Gastrocnemius medialis (tissue), 4 donors: ENCODE measurements at regions of chr14 and their contacts with region 1.

Region 1: DNA sequence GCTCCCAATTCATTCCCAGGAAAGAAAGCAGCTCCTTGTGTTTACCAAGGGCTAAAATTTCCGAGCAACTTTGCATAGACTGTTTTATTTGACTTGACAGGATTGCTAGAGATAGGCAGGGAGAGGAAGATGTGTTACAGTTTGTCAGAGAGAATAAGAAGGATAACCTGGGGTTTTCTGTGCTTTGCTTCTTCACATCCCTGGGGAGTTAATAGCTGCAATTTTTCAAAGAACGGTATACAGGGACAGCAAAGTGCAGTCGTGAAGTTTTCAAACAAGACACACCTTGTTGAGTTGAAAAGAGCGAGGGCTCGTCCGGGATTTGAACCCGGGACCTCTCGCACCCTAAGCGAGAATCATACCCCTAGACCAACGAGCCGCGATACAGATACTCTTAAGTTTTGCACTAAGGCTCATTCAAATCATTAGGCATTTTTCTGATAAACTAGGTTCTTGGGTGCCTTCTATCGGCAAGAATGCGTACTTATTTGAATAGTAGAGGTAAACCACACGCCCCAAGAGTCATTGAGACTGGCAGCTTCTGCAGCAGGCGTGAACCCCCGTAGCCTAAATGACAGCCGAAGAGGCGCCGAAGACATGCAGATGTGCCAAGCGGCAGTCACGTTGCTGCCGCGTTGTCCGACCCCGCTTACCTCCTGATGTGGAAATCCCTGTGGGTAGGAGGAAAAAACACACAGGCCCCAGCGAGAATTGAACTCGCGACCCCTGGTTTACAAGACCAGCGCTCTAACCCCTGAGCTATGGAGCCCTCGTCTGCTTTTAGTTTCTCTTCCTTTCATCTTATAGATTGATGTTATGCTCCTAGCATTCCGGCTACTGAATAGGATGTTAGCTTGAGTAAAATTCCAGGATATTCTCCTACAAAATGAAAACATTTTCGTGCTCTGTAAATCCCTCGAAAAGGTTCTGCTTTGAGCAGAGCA is 22.2 kb upstream of the RNASE12 start:
- DNase-seq: peak; percentile 62 to 76
- ATAC-seq: peak; percentile 79 to 82
- H3K4me3 ChIP-seq: peak overlapping the region; percentile 56 to 66 (median 58)
- H3K27ac ChIP-seq: peak overlapping the region; percentile 44 to 73 (median 68)
- H3K4me1 ChIP-seq: peaks cover 9 to 17% of the 10 kb centered on the region in 2 donors
- H3K27me3 ChIP-seq: no peaks in the 10 kb centered on the region
- CTCF ChIP-seq: peak; percentile 72 to 93 (median 83)
- POLR2A ChIP-seq: no peak

Region 2: GRCh38 chr14:20305265-20306078 is 307.9 kb before region 1 on chr14 and contains the start of gene TTC5:
- in situ Hi-C with region 1: no loop called
- intact Hi-C with region 1: loop called (anchors 5 kb)
- DNase-seq: peak; percentile 61 to 76
- ATAC-seq: peak; percentile 94 to 98
- H3K4me3 ChIP-seq: peak within 1 kb of the TSS; percentile 57 to 81 (median 73)
- H3K27ac ChIP-seq: peak within 1 kb of the TSS; percentile 31 to 62 (median 51)
- H3K4me1 ChIP-seq: peaks cover 10 to 13% of the 10 kb centered on the region in 2 donors
- H3K27me3 ChIP-seq: no peaks in the 10 kb centered on the region
- CTCF ChIP-seq: peak; percentile 64 to 90 (median 82)
- POLR2A ChIP-seq: no peak
- total RNA-seq, gene TTC5: 3.7 to 6.3 (median 4.8) TPM

Region 3: GRCh38 chr14:20343092-20343861 is 270.1 kb before region 1 on chr14 and contains the start of gene PARP2:
- in situ Hi-C with region 1: no loop called
- intact Hi-C with region 1: loop called (anchors 5 kb)
- DNase-seq: peak; percentile 97 to 98
- ATAC-seq: peak; percentile 96 to 97
- H3K4me3 ChIP-seq: peak within 1 kb of the TSS; percentile 74 to 83 (median 78)
- H3K27ac ChIP-seq: peak within 1 kb of the TSS; percentile 88 to 94 (median 92)
- H3K4me1 ChIP-seq: peaks cover 5 to 10% of the 10 kb centered on the region in 2 donors
- H3K27me3 ChIP-seq: no peaks in the 10 kb centered on the region
- CTCF ChIP-seq: no peak
- POLR2A ChIP-seq: peak; percentile 90 to 97
- total RNA-seq, gene PARP2: 5.1 to 15.0 (median 7.0) TPM

Region 4: DNA sequence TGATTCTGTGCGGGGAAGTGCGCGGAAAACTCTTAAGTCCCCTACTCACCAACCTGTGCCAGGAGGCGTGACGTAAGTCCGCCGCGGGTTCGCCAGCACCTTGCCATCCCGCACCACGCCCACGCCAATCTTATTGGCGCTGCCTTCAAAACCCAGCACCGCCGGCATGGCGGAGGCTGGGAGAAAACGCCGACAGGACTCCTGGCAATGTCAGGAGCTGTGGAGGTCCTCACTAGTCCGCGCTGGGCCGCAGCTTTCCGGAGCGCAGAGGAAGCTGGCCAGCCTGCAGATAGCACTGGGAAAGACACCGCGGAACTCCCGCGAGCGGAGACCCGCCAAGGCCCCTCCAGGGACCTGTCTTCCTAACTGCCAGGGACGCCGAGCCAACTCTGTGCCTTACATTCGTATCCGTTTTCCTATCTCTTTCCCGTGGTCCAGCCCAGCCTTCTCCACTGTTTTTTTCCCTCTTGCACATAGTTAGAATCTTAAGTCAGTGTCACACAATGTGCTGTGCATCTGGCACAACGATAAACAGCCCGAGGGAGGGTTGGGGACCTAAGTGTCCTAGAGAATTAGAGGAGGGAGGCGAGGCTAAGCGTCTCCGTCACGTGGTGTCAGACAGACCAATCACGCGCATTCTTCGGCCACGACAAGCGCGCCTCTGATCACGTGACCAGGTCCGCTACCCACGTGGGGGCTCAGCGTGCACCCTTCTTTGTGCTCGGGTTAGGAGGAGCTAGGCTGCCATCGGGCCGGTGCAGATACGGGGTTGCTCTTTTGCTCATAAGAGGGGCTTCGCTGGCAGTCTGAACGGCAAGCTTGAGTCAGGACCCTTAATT is 158.6 kb before region 1 on chr14 and contains the starts of genes APEX1 and OSGEP:
- in situ Hi-C with region 1: no loop called
- intact Hi-C with region 1: loop called (anchors 1 kb)
- DNase-seq: peak; percentile 99
- ATAC-seq: peak; percentile 95 to 96
- H3K4me3 ChIP-seq: peak within 1 kb of the TSS; percentile 81 to 88 (median 87)
- H3K27ac ChIP-seq: peak within 1 kb of the TSS; percentile 86 to 98 (median 98)
- H3K4me1 ChIP-seq: peaks cover 23 to 29% of the 10 kb centered on the region in 2 donors
- H3K27me3 ChIP-seq: no peaks in the 10 kb centered on the region
- CTCF ChIP-seq: peak in 3 of 5 experiments; percentile 20 to 51 (median 51)
- POLR2A ChIP-seq: peak; percentile 91 to 95
- total RNA-seq, gene APEX1: 65.6 to 132 (median 94.2) TPM
- total RNA-seq, gene OSGEP: 15.8 to 21.7 (median 20.5) TPM

Region 5: DNA sequence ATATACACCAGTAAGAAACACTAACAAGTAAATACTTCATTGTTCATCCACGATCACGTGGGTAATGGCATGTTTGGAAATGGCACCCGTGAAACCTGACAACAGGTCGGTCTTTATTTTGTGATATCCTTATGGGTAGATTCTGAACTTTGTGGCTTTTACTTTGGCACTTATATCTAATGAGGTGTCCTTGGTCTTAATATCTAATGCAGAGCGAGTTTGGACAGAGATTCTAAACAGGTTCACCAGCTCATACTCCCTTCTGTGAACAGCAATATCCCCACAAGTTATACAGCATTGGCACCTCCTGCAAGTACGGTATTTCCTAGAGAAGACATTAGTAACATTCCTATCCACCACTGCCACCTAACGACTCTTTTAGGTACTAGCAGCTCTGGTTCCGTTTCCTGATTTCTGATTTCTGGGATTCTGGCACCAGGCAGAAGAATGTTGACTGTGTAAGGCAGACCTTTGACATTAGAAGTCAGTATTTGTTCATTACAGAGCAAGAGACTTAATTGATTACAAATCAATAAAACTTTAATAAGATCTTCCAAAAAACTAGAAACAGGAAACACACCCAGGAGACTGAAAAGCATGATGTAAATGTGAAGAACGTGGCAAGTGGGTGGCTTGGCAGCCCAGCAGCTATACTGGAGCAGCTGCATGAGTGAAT is 77.6 kb after region 1 on chr14:
- in situ Hi-C with region 1: loop called in 3 of 4 experiments (anchors 5 kb)
- intact Hi-C with region 1: loop called (anchors 1 kb)
- DNase-seq: peak in 1 of 2 donors; percentile 16
- ATAC-seq: peak; percentile 93
- H3K4me3 ChIP-seq: no peak overlapping the region
- H3K27ac ChIP-seq: no peak overlapping the region
- H3K4me1 ChIP-seq: no peaks in the 10 kb centered on the region
- H3K27me3 ChIP-seq: no peaks in the 10 kb centered on the region
- CTCF ChIP-seq: peak; percentile 69 to 88 (median 80)
- POLR2A ChIP-seq: no peak

Region 6: GRCh38 chr14:21269252-21270046 is 656.1 kb after region 1 on chr14 and contains the start of gene HNRNPC:
- in situ Hi-C with region 1: no loop called
- intact Hi-C with region 1: loop called (anchors 10 kb)
- DNase-seq: peak; percentile 99 to 100
- ATAC-seq: peak; percentile 97 to 99
- H3K4me3 ChIP-seq: peak within 1 kb of the TSS; percentile 69 to 95 (median 81)
- H3K27ac ChIP-seq: peak within 1 kb of the TSS; percentile 92 to 99 (median 95)
- H3K4me1 ChIP-seq: peaks cover 34 to 38% of the 10 kb centered on the region in 2 donors
- H3K27me3 ChIP-seq: no peaks in the 10 kb centered on the region
- CTCF ChIP-seq: no peak
- POLR2A ChIP-seq: peak; percentile 95 to 96
- total RNA-seq, gene HNRNPC: 281 to 357 (median 318) TPM